Sigmoid colon (tissue), 7 donors: ENCODE measurements at regions of chr4 and their contacts with region 1.

Region 1: GRCh38 chr4:24980064-24980690 is 50.6 kb downstream of the LGI2 start:
- DNase-seq: peak; percentile 83
- H3K4me3 ChIP-seq: peak overlapping the region in 3 of 4 donors; percentile 18 to 27 (median 21)
- H3K27ac ChIP-seq: peak overlapping the region; percentile 51 to 68 (median 54)
- H3K4me1 ChIP-seq: peaks cover 0 to 12% (median 7%) of the 10 kb centered on the region in 4 donors
- H3K27me3 ChIP-seq: no peaks in the 10 kb centered on the region
- CTCF ChIP-seq: peak; percentile 56 to 86 (median 76)
- EP300 ChIP-seq: no peak
- POLR2A ChIP-seq: no peak

Region 2: DNA sequence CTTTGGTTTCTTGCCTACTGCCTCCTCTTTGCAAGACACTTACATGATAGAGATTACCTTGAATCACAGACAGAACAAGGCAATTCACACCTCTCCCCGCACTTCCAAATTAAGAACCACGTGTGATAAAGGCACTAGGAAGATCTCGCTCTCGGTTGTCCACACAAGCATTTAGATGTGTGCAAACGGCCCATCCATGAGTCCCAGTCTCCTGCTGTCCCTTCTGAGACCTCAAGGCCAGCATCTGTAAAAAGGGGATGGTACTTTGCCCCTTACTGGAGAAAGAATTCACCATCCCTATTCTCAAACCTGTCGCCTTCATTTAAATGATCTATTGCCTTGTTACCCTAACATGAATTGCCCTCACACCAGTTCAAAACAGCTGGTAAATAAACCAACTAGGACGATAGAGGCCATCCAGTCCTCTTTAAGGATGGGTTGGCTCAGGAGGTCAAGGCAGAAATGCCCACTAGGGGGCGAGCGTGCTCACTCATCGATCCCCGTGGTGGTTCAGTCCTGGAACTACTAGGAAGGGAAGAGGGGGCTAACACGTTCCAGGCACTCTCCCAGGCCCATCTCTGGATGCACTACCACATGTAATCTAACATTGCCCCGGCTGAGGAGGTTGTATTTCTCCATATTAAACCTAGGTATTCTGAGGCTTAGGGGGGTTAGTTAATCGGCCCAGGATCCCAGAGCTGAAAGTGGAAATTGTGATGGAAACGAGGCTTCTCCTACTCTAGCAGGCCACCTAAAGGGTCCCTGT is 491.6 kb before region 1 on chr4:
- intact Hi-C with region 1: loop called (anchors 5 kb)
- DNase-seq: peak; percentile 82
- H3K4me3 ChIP-seq: no peak overlapping the region
- H3K27ac ChIP-seq: no peak overlapping the region
- H3K4me1 ChIP-seq: no peaks in the 10 kb centered on the region
- H3K27me3 ChIP-seq: no peaks in the 10 kb centered on the region
- CTCF ChIP-seq: peak; percentile 45 to 83 (median 78)
- EP300 ChIP-seq: no peak
- POLR2A ChIP-seq: no peak

Region 3: GRCh38 chr4:25030277-25031076 is 50.3 kb after region 1 on chr4 and contains the start of gene LGI2:
- intact Hi-C with region 1: loop called (anchors 5 kb)
- DNase-seq: peak; percentile 74
- H3K4me3 ChIP-seq: peak within 1 kb of the TSS; percentile 29 to 68 (median 58)
- H3K27ac ChIP-seq: peak within 1 kb of the TSS; percentile 69 to 83 (median 76)
- H3K4me1 ChIP-seq: peaks cover 0 to 28% (median 16%) of the 10 kb centered on the region in 4 donors
- H3K27me3 ChIP-seq: no peaks in the 10 kb centered on the region
- CTCF ChIP-seq: no peak
- EP300 ChIP-seq: no peak
- POLR2A ChIP-seq: no peak
- total RNA-seq, gene LGI2: 1.2 to 6.7 (median 3.5) TPM

Region 4: GRCh38 chr4:25051534-25051933 is 71.4 kb after region 1 on chr4:
- intact Hi-C with region 1: loop called (anchors 5 kb)
- DNase-seq: no peak
- H3K4me3 ChIP-seq: no peak overlapping the region
- H3K27ac ChIP-seq: no peak overlapping the region
- H3K4me1 ChIP-seq: no peaks in the 10 kb centered on the region
- H3K27me3 ChIP-seq: no peaks in the 10 kb centered on the region
- CTCF ChIP-seq: no peak
- EP300 ChIP-seq: no peak
- POLR2A ChIP-seq: no peak

Region 5: DNA sequence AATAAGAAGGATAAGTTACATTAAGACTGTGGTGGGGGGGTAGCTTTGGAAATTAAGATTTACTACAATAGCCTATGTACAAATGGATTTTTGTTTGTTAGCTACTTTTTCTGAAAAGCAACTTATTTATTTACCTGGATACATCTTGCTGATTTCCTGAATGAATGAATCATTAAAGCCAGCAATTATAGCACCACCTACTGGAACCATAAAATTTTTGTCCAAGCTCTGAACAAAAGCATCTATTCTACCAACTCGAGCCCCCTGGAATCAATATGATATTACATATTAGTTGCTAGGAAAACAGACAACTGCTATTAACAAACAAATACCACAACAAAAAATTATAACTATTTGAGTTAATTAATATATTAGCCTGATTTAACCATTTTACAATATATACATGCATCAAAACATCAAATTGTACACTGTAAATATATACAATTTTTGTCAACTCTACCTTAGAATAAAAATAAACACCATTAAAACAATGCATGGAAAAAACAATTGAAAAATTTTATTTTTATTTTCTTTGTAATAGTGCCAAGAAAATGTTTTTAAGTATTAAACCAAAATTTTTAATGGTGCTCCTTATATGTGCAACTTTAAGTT is 164.8 kb after region 1 on chr4:
- intact Hi-C with region 1: loop called (anchors 2 kb)
- DNase-seq: no peak
- H3K4me3 ChIP-seq: no peak overlapping the region
- H3K27ac ChIP-seq: no peak overlapping the region
- H3K4me1 ChIP-seq: no peaks in the 10 kb centered on the region
- H3K27me3 ChIP-seq: no peaks in the 10 kb centered on the region
- CTCF ChIP-seq: peak in 3 of 4 experiments; percentile 31 to 55 (median 38)
- EP300 ChIP-seq: no peak
- POLR2A ChIP-seq: no peak